ENCODE measurements at regions of chr12 and their contacts with region 1.

Region 1: DNA sequence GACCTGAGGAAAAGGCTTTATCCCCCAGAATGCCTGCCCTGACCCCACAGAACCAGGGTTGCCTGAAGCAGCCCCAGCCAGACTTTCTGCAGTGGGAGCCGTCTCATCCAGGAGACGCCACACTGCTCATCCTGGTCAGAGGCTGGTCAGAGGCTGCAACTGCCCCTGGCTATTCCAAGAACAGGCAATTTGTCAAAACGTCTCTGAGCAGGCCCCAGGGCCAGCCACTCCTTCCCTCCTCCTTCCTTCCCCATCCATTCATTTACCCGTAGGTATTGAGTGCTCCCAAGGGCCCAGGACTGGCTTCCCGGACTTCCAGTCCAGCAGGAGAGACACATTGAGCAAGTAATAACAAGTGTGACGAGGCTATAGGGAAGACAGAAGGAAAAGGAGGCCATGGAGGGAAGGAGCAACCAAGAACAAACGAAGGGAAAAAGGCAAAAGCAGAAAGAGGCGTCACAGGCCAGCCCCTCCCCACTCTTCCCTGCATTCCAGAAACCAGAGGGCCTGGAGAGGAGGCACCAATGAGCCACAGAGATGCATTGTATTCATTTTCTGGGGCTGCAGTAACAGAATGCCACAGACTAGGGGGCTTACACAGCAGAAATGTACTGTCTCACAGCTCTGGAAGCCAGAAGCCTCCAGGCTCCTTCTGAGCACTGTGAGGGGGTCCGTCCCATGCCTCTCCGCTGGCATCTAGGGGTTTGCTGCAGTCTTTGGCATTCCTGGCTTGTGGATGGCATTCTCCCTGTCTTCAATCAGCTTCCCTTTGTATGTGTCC is 21.0 kb upstream of the CD9 start:
- DNase-seq: no peak
- ATAC-seq: no peak
- H3K4me3 ChIP-seq: no peak overlapping the region
- H3K27ac ChIP-seq: peak overlapping the region in 2 of 3 donors; percentile 5 to 68
- H3K4me1 ChIP-seq: peaks cover 0 to 36% (median 20%) of the 10 kb centered on the region in 4 donors
- H3K27me3 ChIP-seq: no peaks in the 10 kb centered on the region
- CTCF ChIP-seq: no peak
- POLR2A ChIP-seq: no peak

Region 2: GRCh38 chr12:6067152-6067916 is 111.8 kb before region 1 on chr12:
- intact Hi-C with region 1: loop called in 1 of 2 experiments (anchors 10 kb)
- DNase-seq: peak; percentile 74 to 80 (median 79)
- ATAC-seq: peak; percentile 56 to 71 (median 61)
- H3K4me3 ChIP-seq: no peak overlapping the region
- H3K27ac ChIP-seq: peak overlapping the region in 2 of 3 donors; percentile 21 to 24
- H3K4me1 ChIP-seq: peaks cover 0 to 30% (median 5%) of the 10 kb centered on the region in 4 donors
- H3K27me3 ChIP-seq: no peaks in the 10 kb centered on the region
- CTCF ChIP-seq: peak; percentile 53 to 63 (median 60)
- POLR2A ChIP-seq: no peak

Region 3: GRCh38 chr12:6074979-6075585 is 104.1 kb before region 1 on chr12:
- intact Hi-C with region 1: loop called (anchors 5 to 10 kb)
- DNase-seq: peak in 1 of 3 donors; percentile 59
- ATAC-seq: peak; percentile 3 to 50 (median 34)
- H3K4me3 ChIP-seq: no peak overlapping the region
- H3K27ac ChIP-seq: peak overlapping the region in 1 of 3 donors; percentile 54
- H3K4me1 ChIP-seq: peaks cover 0 to 36% (median 14%) of the 10 kb centered on the region in 4 donors
- H3K27me3 ChIP-seq: no peaks in the 10 kb centered on the region
- CTCF ChIP-seq: no peak
- POLR2A ChIP-seq: peak; percentile 21

Measured in right lobe of liver (tissue), 6 donors.